Motor neuron (in vitro differentiated cells): ENCODE measurements at regions of chr1 and their contacts with region 1.

Region 1: DNA sequence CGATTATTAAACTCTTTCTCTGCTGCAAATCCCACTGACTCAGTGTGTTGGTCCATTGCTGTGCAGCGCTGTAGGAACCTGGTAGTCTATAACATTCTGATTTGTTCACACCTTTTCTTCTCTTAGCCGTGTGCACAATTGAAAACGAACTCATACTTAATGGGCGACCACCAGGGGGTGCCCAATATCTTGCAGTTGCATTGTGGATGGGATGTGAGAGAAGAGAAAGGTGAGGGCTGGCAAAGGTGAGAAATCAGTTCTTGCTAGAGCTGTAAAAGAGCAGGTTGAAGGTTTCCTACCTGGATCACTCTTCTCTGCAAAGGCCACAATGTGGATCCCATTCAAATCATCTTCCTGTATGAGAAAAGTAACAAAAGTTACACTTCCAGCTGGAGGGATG is 51.0 kb downstream of the CASQ2 start:
- ATAC-seq: peak in 4 of 8 experiments; percentile 50 to 75 (median 64)
- H3K4me3 ChIP-seq: no peak overlapping the region
- H3K27ac ChIP-seq: no peak overlapping the region
- H3K4me1 ChIP-seq: peaks cover 3 to 15% of the 10 kb centered on the region in 2 donors

Region 2: DNA sequence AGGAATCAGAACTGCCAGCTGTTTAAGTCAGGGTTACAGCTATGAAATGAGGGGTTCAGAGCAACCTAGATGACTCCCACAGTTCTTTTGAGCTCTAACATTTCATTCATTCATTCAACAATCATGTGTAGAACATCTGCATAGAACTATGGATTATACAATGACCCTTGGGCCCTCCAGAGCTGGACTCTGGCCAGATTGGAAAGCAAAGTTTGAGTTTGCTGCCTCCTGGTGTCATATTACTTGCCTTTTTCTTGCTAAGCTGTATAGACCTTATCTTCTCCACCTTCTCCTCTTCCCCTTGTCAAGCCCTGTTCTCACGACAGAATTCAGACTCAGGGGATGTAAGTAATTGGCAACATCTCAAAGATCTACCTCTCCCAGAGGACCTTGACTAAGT is 47.0 kb after region 1 on chr1:
- in situ Hi-C with region 1: loop called in 2 of 9 experiments (anchors 10 kb)
- ATAC-seq: peak in 4 of 8 experiments; percentile 64 to 83 (median 77)
- H3K4me3 ChIP-seq: no peak overlapping the region
- H3K27ac ChIP-seq: no peak overlapping the region
- H3K4me1 ChIP-seq: no peaks in the 10 kb centered on the region